Activated CD8-positive, alpha-beta T cell treated with anti-CD3 and anti-CD28 coated beads for 36 hours (primary cell): ENCODE measurements at regions of chr11 and their contacts with region 1.

Region 1: DNA sequence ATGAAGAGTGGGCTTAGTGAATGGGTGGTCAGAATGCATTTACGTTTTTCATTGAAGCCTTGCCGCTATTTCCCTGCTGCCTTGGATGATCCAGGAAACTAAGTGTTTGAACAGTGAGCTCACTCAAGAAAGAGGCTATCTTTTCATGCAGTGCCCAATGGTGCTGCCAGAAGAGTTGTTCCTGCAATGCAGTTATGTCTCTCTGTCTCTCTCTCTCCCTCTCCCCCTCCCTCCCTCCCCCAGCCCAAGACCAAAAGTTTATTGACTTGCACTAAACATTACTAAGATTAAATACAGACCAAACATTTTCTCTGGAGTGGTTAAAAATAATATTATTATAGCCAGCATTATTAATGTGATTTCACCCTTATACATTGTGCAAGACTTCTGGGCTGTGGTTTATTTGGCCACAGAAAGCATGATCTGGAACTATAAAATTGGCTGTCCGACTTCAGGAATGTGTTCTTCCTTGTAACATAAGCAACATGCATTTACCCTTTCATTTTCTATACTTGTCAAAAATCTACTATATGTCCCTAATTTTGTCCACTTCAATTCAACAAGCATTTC is 6.6 kb upstream of the FUT4 start:
- DNase-seq: no peak
- ATAC-seq: no peak
- H3K4me3 Mint-ChIP-seq: no peak overlapping the region
- H3K27ac Mint-ChIP-seq: no peak overlapping the region
- H3K4me1 Mint-ChIP-seq: no peaks in the 10 kb centered on the region
- H3K27me3 Mint-ChIP-seq: peaks cover 15% of the 10 kb centered on the region
- CTCF ChIP-seq: no peak

Region 2: GRCh38 chr11:94493281-94494125 is 43.6 kb before region 1 on chr11 and contains the starts of genes ANKRD49 and MRE11:
- CTCF ChIA-PET with region 1: no interaction called
- POLR2A ChIA-PET with region 1: no interaction called
- intact Hi-C with region 1: no loop called
- DNase-seq: peak; percentile 98
- ATAC-seq: peak; percentile 100
- H3K4me3 Mint-ChIP-seq: peak within 1 kb of the TSS; percentile 94
- H3K27ac Mint-ChIP-seq: peak within 1 kb of the TSS; percentile 96
- H3K4me1 Mint-ChIP-seq: peaks cover 32% of the 10 kb centered on the region
- H3K27me3 Mint-ChIP-seq: no peaks in the 10 kb centered on the region
- CTCF ChIP-seq: no peak
- total RNA-seq, gene ANKRD49: 17.9 to 19.1 TPM
- total RNA-seq, gene MRE11: 38.3 to 42.0 TPM

Region 3: DNA sequence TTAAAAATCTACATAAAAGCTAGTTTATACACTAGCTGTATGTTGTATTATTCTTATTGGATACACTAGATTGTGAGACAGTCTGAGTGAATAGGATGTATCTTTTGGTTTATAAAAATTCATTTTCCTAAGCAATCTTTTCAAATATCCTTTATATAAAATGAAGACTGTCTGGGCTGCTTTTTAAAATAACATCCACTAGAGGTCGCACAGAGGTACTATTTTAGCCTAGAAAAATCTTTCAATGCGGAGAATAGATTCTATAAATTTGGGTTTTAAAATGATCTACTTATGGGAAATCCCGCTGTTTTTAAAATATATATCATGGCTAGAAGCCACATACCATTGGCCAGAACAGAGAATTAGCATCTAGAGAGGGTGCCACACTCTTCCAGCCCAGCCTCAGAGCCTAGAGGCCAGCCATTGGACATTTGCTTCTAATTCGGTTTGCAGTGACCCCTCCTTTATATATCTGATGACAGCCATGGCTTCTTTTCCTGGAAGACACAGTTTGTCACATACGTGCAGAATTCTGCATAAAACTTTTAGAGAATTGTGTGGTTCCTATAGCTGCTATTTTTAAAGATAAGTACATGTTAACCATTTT is 17.5 kb before region 1 on chr11:
- CTCF ChIA-PET with region 1: interaction called, 10 read pairs
- POLR2A ChIA-PET with region 1: no interaction called
- intact Hi-C with region 1: no loop called
- DNase-seq: peak; percentile 26
- ATAC-seq: no peak
- H3K4me3 Mint-ChIP-seq: no peak overlapping the region
- H3K27ac Mint-ChIP-seq: no peak overlapping the region
- H3K4me1 Mint-ChIP-seq: no peaks in the 10 kb centered on the region
- H3K27me3 Mint-ChIP-seq: no peaks in the 10 kb centered on the region
- CTCF ChIP-seq: peak; percentile 69

Region 4: DNA sequence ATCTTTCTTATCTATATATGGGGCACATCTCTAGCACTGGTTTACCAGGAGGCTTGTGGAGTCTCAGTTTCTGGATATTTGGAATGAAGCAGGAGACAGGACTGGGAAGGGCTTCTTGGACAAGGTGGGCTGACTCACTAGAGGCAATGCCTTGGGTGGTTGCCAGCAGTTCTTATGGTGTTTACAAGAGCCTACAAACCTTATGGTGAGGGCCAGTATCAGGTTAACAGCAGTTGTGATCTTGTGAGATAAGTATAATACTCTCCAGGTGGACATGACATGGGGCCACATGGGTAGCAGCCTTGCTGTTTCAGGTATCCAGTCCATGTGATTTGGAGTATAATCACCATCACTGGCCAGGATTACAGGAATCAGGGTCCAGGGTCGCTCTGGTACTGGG is 16.8 kb after region 1 on chr11:
- CTCF ChIA-PET with region 1: no interaction called
- POLR2A ChIA-PET with region 1: no interaction called
- intact Hi-C with region 1: no loop called
- DNase-seq: no peak
- ATAC-seq: no peak
- H3K4me3 Mint-ChIP-seq: no peak overlapping the region
- H3K27ac Mint-ChIP-seq: no peak overlapping the region
- H3K4me1 Mint-ChIP-seq: peaks cover 10% of the 10 kb centered on the region
- H3K27me3 Mint-ChIP-seq: no peaks in the 10 kb centered on the region
- CTCF ChIP-seq: no peak